ENCODE measurements at regions of chr6 and their contacts with region 1.

Region 1: GRCh38 chr6:30711758-30712380 is 5.2 kb downstream of the MDC1 start:
- DNase-seq: peak; percentile 69
- ATAC-seq: peak; percentile 81
- H3K4me3 Mint-ChIP-seq: peak overlapping the region; percentile 53
- H3K27ac Mint-ChIP-seq: peak overlapping the region; percentile 90
- H3K4me1 Mint-ChIP-seq: peaks cover 53% of the 10 kb centered on the region
- H3K27me3 Mint-ChIP-seq: no peaks in the 10 kb centered on the region

Region 2: DNA sequence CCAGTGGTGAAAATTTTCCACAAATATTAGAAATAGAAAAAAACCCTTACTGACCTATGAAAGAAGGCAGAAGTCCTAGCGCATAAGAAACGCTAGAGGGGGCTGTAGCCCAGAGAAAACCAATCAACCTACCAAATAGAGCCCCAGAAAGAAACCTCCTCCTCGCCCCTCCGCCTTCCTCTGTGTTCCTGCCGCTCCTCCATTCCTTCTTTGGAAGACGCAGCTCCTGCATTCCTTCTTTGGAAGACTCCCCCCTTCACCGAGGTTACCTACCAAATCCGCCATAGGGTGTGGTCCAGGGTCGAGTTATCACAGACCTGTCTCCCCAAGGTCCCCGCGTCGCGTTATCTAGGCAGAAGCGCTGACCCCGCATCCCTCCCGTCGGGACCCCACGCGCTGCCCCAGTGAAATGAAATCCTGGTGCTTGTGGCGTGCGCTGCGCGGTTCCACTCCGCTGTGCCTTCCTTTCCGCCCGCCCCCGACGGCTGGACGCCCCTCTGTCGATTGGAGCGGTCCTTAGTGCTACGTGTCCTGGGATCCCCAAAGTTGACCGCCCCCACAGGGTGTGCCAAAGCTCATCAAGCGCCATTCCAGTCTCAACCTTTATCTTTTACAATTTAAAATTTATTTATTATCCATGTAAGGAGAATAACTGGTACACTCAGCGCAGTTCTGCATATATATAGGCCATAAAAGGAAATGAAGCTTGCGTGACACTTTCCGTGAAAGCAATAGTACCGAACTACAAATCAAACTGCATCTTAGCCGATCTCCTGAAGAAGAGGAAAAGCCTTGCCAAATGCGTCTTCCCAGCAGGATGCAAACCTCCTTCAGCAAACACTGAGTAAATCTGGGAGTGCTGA is 354.0 kb before region 1 on chr6:
- CTCF ChIA-PET with region 1: no interaction called
- DNase-seq: peak; percentile 62
- ATAC-seq: peak; percentile 88
- H3K4me3 Mint-ChIP-seq: peak overlapping the region; percentile 54
- H3K27ac Mint-ChIP-seq: no peak overlapping the region
- H3K4me1 Mint-ChIP-seq: peaks cover 5% of the 10 kb centered on the region
- H3K27me3 Mint-ChIP-seq: peaks cover 85% of the 10 kb centered on the region

Region 3: DNA sequence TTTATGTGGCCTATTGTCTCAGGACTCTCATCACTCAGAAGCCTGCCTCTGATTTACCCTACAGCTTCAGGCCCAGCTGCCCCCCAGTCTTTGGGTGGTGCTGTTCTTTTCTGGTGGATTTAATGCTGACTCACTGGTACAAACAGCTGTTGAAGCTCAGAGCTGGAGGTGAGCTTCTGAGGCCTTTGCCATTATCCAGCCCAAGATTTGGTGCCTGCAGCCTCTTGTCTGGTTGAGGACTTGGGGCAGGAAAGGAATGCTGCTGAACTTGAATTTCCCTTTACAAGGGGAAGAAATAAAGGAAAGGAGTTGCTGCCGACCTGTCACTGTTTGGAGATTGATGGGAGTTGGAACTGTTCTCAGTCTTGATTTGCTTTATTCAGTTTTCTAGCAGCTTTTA is 120.9 kb before region 1 on chr6:
- CTCF ChIA-PET with region 1: no interaction called
- DNase-seq: no peak
- ATAC-seq: no peak
- H3K4me3 Mint-ChIP-seq: no peak overlapping the region
- H3K27ac Mint-ChIP-seq: peak overlapping the region; percentile 52
- H3K4me1 Mint-ChIP-seq: no peaks in the 10 kb centered on the region
- H3K27me3 Mint-ChIP-seq: no peaks in the 10 kb centered on the region

Region 4: GRCh38 chr6:30686908-30687658 is 24.8 kb before region 1 on chr6:
- CTCF ChIA-PET with region 1: interaction called, 936 read pairs
- DNase-seq: peak; percentile 88
- ATAC-seq: peak; percentile 37
- H3K4me3 Mint-ChIP-seq: peak overlapping the region; percentile 90
- H3K27ac Mint-ChIP-seq: peak overlapping the region; percentile 87
- H3K4me1 Mint-ChIP-seq: peaks cover 38% of the 10 kb centered on the region
- H3K27me3 Mint-ChIP-seq: no peaks in the 10 kb centered on the region

Region 5: DNA sequence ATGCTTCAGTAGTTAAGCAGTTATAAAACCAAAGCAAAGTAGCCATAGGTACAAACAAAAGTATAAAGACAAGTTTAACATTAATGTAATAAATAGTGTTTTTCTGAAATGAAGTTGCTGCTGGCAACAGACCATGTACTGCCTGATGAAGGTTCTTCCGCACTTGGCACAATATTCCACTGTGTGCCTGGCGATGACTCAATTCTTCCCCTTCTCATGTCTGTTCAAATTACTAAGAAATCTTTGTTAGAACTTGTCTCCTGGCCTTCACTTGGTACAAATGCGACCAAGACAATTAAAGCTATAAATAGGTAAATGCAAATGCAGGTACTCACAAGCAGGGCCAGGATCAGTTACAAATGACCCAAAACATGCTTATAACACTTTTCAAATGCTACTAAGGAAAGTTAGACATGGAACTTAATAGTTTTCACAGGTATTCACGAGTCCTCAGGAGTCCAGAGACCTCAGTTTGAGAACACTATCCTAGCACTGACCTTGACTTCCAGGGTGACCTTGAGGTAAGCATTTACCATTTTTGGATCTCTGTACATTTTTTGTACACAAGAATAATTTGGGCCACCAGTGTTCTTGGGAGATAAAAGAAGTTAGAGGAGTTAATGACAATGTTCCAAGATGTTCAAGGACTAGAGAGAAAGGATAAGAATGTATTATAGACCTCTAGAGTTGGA is 164.3 kb after region 1 on chr6:
- CTCF ChIA-PET with region 1: no interaction called
- DNase-seq: no peak
- ATAC-seq: no peak
- H3K4me3 Mint-ChIP-seq: no peak overlapping the region
- H3K27ac Mint-ChIP-seq: no peak overlapping the region
- H3K4me1 Mint-ChIP-seq: peaks cover 18% of the 10 kb centered on the region
- H3K27me3 Mint-ChIP-seq: peaks cover under 1% of the 10 kb centered on the region